Calu3 (cell line): ENCODE measurements at regions of chr18 and their contacts with region 1.

Region 1: GRCh38 chr18:71398531-71398930 is 1109.7 kb downstream of the SOCS6 start:
- DNase-seq: peak; percentile 32
- H3K4me3 Mint-ChIP-seq: no peak overlapping the region
- H3K27ac Mint-ChIP-seq: no peak overlapping the region
- H3K4me1 Mint-ChIP-seq: no peaks in the 10 kb centered on the region
- H3K27me3 Mint-ChIP-seq: no peaks in the 10 kb centered on the region
- CTCF ChIP-seq: peak; percentile 28

Region 2: DNA sequence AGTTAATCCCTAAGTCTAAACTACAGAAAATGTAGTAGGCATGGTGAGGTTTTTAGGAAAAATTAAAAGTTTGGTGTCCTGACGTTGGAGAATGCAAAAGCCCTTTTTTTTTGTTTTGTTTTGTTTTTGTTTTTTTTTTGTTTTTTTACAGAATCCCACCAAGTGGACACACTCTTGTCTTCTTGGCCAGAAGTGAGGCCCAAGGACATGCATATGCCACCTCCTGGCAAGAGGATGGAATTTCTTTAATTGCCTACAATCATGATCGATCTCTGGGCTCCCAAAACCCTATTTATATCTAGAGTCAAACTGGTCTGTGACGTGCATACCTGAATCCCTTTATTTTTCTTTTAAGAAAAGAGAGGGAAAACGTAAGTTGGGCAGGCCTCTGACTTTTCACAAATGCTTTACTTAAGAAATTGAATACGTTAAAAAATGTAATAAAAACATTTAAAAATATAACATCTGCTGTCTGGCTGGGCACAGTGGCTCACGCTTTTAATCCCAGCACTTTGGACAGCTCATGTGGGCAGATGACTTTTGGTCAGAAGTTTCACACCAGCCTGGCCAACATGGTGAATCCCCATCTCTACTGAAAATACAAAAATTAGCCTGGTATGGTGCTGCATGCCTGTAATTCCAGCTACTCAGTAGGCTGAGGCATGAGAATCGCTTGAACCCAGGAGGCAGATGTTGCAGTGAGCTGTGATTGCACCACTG is 642.9 kb after region 1 on chr18:
- CTCF ChIA-PET with region 1: no interaction called
- intact Hi-C with region 1: loop called (anchors 1 kb)
- DNase-seq: peak; percentile 2
- H3K4me3 Mint-ChIP-seq: no peak overlapping the region
- H3K27ac Mint-ChIP-seq: no peak overlapping the region
- H3K4me1 Mint-ChIP-seq: no peaks in the 10 kb centered on the region
- H3K27me3 Mint-ChIP-seq: no peaks in the 10 kb centered on the region
- CTCF ChIP-seq: peak; percentile 13

Region 3: DNA sequence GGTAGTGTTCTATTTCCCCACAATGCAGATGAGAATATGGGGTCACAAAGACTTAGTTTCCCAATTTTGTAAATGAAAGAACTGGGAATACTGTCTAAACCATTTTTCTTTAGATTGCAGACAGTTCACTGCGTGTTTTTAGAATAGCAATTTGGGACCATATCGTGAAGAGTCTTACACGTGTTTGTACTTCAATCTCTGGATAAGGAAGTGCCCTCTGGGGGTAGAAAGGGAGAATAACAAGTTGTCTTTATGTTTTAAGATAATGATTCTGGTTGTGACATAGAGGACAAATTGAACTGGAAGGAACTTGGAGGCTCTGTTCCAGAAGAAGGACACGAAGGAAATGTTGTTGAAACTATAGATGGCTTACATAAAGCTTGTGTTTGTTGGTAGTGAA is 687.9 kb after region 1 on chr18:
- CTCF ChIA-PET with region 1: no interaction called
- intact Hi-C with region 1: loop called (anchors 2 kb)
- DNase-seq: no peak
- H3K4me3 Mint-ChIP-seq: no peak overlapping the region
- H3K27ac Mint-ChIP-seq: no peak overlapping the region
- H3K4me1 Mint-ChIP-seq: peaks cover 9% of the 10 kb centered on the region
- H3K27me3 Mint-ChIP-seq: no peaks in the 10 kb centered on the region
- CTCF ChIP-seq: peak; percentile 62

Region 4: GRCh38 chr18:72530622-72531021 is 1132.1 kb after region 1 on chr18:
- CTCF ChIA-PET with region 1: no interaction called
- intact Hi-C with region 1: loop called (anchors 10 kb)
- DNase-seq: no peak
- H3K4me3 Mint-ChIP-seq: no peak overlapping the region
- H3K27ac Mint-ChIP-seq: no peak overlapping the region
- H3K4me1 Mint-ChIP-seq: no peaks in the 10 kb centered on the region
- H3K27me3 Mint-ChIP-seq: no peaks in the 10 kb centered on the region
- CTCF ChIP-seq: no peak